B cell (primary cell): ENCODE measurements at regions of chr15 and their contacts with region 1.

Region 1: GRCh38 chr15:77118882-77119321 is 48.0 kb upstream of the TSPAN3 start:
- DNase-seq: peak; percentile 76
- ATAC-seq: peak; percentile 54
- H3K4me3 ChIP-seq: no peak overlapping the region
- H3K4me3 Mint-ChIP-seq: no peak overlapping the region
- H3K27ac ChIP-seq: no peak overlapping the region
- H3K27ac Mint-ChIP-seq: no peak overlapping the region
- H3K4me1 ChIP-seq: peaks cover 24 to 31% of the 10 kb centered on the region in 2 donors
- H3K4me1 Mint-ChIP-seq: peaks cover 47% of the 10 kb centered on the region
- H3K27me3 ChIP-seq: no peaks in the 10 kb centered on the region
- H3K27me3 Mint-ChIP-seq: no peaks in the 10 kb centered on the region
- CTCF ChIP-seq: peak; percentile 77

Region 2: DNA sequence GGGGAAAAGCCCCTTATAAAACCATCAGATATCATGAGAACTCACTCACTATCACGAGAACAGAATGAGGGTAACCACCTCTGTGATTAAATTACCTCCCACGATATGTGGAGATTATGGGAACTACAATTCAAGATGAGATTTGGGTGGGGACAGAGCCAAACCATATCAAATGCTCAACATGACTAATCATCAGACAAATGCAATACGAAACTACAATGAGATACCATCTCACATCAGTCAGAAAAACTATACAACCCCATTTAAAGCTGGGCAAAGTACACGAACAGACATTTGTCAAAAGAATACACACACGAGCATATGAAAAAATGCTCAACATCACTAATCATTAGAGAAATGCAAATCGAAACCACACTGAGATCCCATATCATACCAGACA is 281.4 kb before region 1 on chr15:
- CTCF ChIA-PET with region 1: no interaction called
- POLR2A ChIA-PET with region 1: no interaction called
- intact Hi-C with region 1: no loop called
- DNase-seq: no peak
- ATAC-seq: no peak
- H3K4me3 ChIP-seq: no peak overlapping the region
- H3K4me3 Mint-ChIP-seq: no peak overlapping the region
- H3K27ac ChIP-seq: no peak overlapping the region
- H3K27ac Mint-ChIP-seq: no peak overlapping the region
- H3K4me1 ChIP-seq: peaks cover 0 to 2% of the 10 kb centered on the region in 2 donors
- H3K4me1 Mint-ChIP-seq: peaks cover 10% of the 10 kb centered on the region
- H3K27me3 ChIP-seq: no peaks in the 10 kb centered on the region
- H3K27me3 Mint-ChIP-seq: no peaks in the 10 kb centered on the region
- CTCF ChIP-seq: no peak

Region 3: DNA sequence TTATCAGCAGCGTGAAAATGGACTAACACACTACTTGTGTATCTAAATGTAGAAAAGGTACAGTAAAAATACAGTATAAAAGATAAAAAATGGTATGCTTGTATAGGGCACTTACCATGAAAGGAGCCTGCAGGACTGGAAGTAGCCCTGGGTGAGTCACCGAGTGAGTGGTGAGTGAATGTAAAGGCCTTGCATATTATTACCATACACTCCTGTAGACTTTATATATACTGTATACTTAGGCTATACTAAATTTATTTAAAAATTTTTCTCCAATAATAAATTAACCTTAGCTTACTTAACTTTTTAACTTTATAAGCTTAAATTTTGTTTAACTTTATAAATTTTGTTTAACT is 19.2 kb after region 1 on chr15:
- CTCF ChIA-PET with region 1: interaction called, 18 read pairs
- POLR2A ChIA-PET with region 1: no interaction called
- intact Hi-C with region 1: no loop called
- DNase-seq: no peak
- ATAC-seq: no peak
- H3K4me3 ChIP-seq: no peak overlapping the region
- H3K4me3 Mint-ChIP-seq: no peak overlapping the region
- H3K27ac ChIP-seq: no peak overlapping the region
- H3K27ac Mint-ChIP-seq: no peak overlapping the region
- H3K4me1 ChIP-seq: no peaks in the 10 kb centered on the region
- H3K4me1 Mint-ChIP-seq: no peaks in the 10 kb centered on the region
- H3K27me3 ChIP-seq: no peaks in the 10 kb centered on the region
- H3K27me3 Mint-ChIP-seq: no peaks in the 10 kb centered on the region
- CTCF ChIP-seq: no peak

Region 4: DNA sequence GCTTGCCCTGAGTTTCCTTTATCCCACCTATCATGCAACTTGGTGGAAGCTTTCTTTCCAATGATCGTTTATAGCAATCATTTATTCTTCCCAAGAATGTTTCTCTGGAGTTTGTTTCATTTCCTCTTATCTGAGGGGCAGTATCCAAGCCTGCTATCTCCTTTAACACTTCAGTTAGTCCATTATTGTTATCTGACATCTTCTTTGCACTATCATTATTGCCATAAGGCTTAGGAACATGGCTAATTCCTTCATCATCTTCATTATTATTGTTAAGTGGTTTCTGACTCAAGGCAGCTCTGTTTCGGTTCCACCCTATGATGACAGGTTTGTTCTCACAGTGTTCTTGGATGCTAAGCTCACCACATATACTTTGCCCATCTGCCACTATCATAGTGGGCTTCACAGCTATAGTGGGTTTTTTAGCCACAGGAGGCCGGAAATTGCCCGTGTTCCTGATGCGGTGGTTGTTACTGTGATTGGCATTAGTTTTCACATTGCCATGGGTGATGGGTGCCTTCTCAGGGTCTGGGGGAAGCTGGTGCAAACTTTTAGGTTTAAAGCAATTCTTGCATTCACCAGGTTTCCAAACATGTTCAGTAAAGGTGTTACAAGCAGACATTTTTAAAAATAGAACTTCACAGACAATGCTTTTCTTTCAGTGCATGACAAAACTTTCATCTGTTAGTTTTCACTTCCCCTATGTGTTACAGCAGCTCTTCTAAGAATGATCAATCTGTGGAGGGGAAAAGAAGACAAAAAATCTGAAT is 62.6 kb after region 1 on chr15:
- CTCF ChIA-PET with region 1: interaction called, 38 read pairs
- POLR2A ChIA-PET with region 1: no interaction called
- intact Hi-C with region 1: loop called (anchors 1 kb)
- DNase-seq: peak; percentile 69
- ATAC-seq: peak; percentile 70
- H3K4me3 ChIP-seq: peak overlapping the region in 4 of 5 experiments; percentile 35 to 50 (median 41)
- H3K4me3 Mint-ChIP-seq: peak overlapping the region; percentile 75
- H3K27ac ChIP-seq: peak overlapping the region; percentile 76 to 84
- H3K27ac Mint-ChIP-seq: peak overlapping the region; percentile 88
- H3K4me1 ChIP-seq: peaks cover 74 to 81% of the 10 kb centered on the region in 2 donors
- H3K4me1 Mint-ChIP-seq: peaks cover 72% of the 10 kb centered on the region
- H3K27me3 ChIP-seq: no peaks in the 10 kb centered on the region
- H3K27me3 Mint-ChIP-seq: no peaks in the 10 kb centered on the region
- CTCF ChIP-seq: no peak

Region 5: DNA sequence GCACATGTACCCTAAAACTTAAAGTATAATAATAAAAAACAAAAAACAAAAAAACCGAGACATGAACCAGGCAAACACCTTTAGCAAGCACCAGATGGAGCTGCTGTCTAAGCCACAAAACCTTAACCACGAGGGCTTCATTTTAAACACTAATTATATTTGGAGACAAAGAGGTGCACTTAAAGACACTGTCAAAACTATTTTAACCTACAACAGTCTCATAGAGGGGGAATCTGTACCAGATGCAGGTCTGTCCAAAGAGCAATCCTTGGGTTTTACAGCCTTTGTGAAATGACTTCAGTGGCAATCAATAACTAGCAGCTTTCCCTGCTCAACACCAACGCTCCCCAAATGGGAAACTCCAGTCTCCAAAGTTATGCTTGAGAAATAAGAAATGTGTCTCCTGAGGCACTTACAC is 67.7 kb after region 1 on chr15:
- CTCF ChIA-PET with region 1: interaction called, 38 read pairs
- POLR2A ChIA-PET with region 1: no interaction called
- intact Hi-C with region 1: loop called (anchors 1 kb)
- DNase-seq: peak; percentile 60
- ATAC-seq: no peak
- H3K4me3 ChIP-seq: no peak overlapping the region
- H3K4me3 Mint-ChIP-seq: no peak overlapping the region
- H3K27ac ChIP-seq: peak overlapping the region; percentile 79 to 80
- H3K27ac Mint-ChIP-seq: peak overlapping the region; percentile 53
- H3K4me1 ChIP-seq: peaks cover 76% of the 10 kb centered on the region in 2 donors
- H3K4me1 Mint-ChIP-seq: peaks cover 66% of the 10 kb centered on the region
- H3K27me3 ChIP-seq: no peaks in the 10 kb centered on the region
- H3K27me3 Mint-ChIP-seq: no peaks in the 10 kb centered on the region
- CTCF ChIP-seq: peak; percentile 76

Region 6: GRCh38 chr15:77243135-77243534 is 124.2 kb after region 1 on chr15:
- CTCF ChIA-PET with region 1: no interaction called
- POLR2A ChIA-PET with region 1: no interaction called
- intact Hi-C with region 1: no loop called
- DNase-seq: no peak
- ATAC-seq: no peak
- H3K4me3 ChIP-seq: no peak overlapping the region
- H3K4me3 Mint-ChIP-seq: no peak overlapping the region
- H3K27ac ChIP-seq: no peak overlapping the region
- H3K27ac Mint-ChIP-seq: no peak overlapping the region
- H3K4me1 ChIP-seq: no peaks in the 10 kb centered on the region
- H3K4me1 Mint-ChIP-seq: peaks cover 6% of the 10 kb centered on the region
- H3K27me3 ChIP-seq: no peaks in the 10 kb centered on the region
- H3K27me3 Mint-ChIP-seq: no peaks in the 10 kb centered on the region
- CTCF ChIP-seq: no peak

Region 7: GRCh38 chr15:77482570-77482969 is 363.7 kb after region 1 on chr15:
- CTCF ChIA-PET with region 1: interaction called, 15 read pairs
- POLR2A ChIA-PET with region 1: no interaction called
- intact Hi-C with region 1: no loop called
- DNase-seq: no peak
- ATAC-seq: no peak
- H3K4me3 ChIP-seq: no peak overlapping the region
- H3K4me3 Mint-ChIP-seq: no peak overlapping the region
- H3K27ac ChIP-seq: no peak overlapping the region
- H3K27ac Mint-ChIP-seq: no peak overlapping the region
- H3K4me1 ChIP-seq: peaks cover 5 to 8% of the 10 kb centered on the region in 2 donors
- H3K4me1 Mint-ChIP-seq: peaks cover 5% of the 10 kb centered on the region
- H3K27me3 ChIP-seq: no peaks in the 10 kb centered on the region
- H3K27me3 Mint-ChIP-seq: no peaks in the 10 kb centered on the region
- CTCF ChIP-seq: no peak